OCI-LY7 (cell line): ENCODE measurements at regions of chr6 and their contacts with region 1.

Region 1: GRCh38 chr6:19771753-19772336 is 65.3 kb upstream of the ID4 start:
- DNase-seq: no peak
- H3K4me3 ChIP-seq: no peak overlapping the region
- H3K27ac ChIP-seq: no peak overlapping the region
- H3K4me1 ChIP-seq: peaks cover 18% of the 10 kb centered on the region
- CTCF ChIP-seq: no peak

Region 2: DNA sequence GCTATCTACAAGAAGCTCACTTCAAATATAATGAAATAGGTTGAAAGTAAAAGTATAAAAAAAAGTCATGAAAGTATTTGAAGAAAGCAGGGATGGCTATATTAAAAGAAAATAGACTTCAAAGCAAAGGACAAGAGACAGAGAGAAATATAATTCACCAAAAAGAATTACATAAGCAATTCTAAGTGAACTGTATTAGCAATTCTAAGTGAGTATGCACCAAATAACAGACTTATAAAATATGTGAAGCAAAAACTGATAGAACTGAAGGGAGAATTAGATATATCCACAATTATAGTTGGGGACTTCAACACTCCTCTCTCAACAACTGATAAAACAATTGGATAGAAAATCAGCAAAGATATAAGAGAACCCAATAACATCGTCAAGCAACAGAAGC is 26.5 kb after region 1 on chr6:
- CTCF ChIA-PET with region 1: no interaction called
- POLR2A ChIA-PET with region 1: interaction called, 14 read pairs
- intact Hi-C with region 1: no loop called
- DNase-seq: no peak
- H3K4me3 ChIP-seq: no peak overlapping the region
- H3K27ac ChIP-seq: no peak overlapping the region
- H3K4me1 ChIP-seq: peaks cover 54% of the 10 kb centered on the region
- CTCF ChIP-seq: no peak